WTC11 (cell line): ENCODE measurements at regions of chr18 and their contacts with region 1.

Region 1: GRCh38 chr18:48951448-48952286 is 902 bp upstream of the SMAD7 start:
- DNase-seq: peak; percentile 76
- ATAC-seq: peak; percentile 22
- H3K4me3 Mint-ChIP-seq: peak overlapping the region; percentile 91
- H3K27ac Mint-ChIP-seq: peak overlapping the region; percentile 99
- H3K4me1 Mint-ChIP-seq: peaks cover 52% of the 10 kb centered on the region
- H3K27me3 Mint-ChIP-seq: peaks cover 5% of the 10 kb centered on the region
- CTCF ChIP-seq: no peak

Region 2: DNA sequence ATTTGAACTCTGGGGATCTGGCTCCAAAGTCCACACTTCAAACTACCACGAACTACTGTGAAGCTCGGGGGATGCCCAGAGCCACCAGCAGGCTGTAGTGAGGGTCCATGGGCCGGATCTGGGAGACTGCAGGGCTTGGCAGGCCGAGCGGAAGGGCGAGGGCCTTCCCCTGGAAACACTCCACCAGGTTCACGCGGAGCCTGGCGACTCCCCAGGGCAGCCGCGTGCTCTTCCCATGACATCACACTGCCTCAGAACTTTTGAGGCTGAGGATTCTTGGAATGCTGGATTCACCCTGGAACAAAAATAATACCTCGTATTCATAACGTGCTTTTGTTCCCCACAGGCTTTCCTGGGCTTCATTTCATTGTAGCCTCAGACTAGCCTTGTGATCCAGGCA is 201.9 kb before region 1 on chr18:
- CTCF ChIA-PET with region 1: no interaction called
- POLR2A ChIA-PET with region 1: no interaction called
- DNase-seq: no peak
- ATAC-seq: no peak
- H3K4me3 Mint-ChIP-seq: no peak overlapping the region
- H3K27ac Mint-ChIP-seq: no peak overlapping the region
- H3K4me1 Mint-ChIP-seq: no peaks in the 10 kb centered on the region
- H3K27me3 Mint-ChIP-seq: no peaks in the 10 kb centered on the region
- CTCF ChIP-seq: no peak

Region 3: DNA sequence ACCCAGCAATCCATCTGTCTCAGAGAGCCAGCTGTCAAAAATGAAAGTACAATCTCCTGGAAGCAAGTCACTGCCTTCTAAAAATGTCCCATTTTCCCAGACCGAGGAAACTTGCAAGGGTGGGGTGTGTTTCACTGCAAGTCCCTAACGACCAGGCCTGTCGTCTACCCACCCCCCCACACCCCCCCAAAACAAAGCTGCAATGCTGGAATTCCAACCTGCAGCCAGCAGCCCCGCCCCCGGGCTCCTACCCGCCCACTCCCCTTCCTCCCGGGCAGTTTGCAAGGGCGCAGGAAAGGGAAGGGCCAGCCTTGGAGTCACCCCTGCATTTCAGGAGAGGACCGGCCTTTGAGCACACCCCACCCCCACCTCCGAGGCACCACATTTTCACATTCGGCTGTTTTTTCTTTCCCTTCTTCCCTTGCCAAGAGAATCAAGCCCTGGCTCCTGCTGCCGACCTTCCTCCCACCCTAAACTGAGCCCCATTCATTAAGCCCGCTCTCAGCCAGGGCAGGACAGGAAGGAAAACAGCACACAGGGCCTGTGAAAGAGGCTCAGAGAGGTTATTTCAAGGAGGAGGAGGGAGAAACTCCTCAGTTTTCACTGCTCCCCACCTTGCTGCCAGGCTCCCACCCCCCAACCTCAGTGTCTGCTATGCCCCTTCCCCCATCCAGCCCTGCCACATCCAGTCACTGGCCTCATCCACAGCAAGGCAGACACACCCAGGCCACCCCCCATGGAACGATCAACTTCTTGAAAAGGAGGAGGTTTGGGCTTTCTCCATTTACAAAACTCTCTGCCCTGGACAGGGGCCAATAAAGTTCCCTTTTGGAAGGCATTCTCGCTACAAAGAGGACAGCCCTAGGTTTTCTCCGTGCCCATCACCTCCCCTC is 12.2 kb before region 1 on chr18:
- CTCF ChIA-PET with region 1: interaction called, 5 read pairs
- POLR2A ChIA-PET with region 1: interaction called, 10 read pairs
- DNase-seq: peak; percentile 66
- ATAC-seq: peak; percentile 56
- H3K4me3 Mint-ChIP-seq: peak overlapping the region; percentile 20
- H3K27ac Mint-ChIP-seq: peak overlapping the region; percentile 69
- H3K4me1 Mint-ChIP-seq: peaks cover 95% of the 10 kb centered on the region
- H3K27me3 Mint-ChIP-seq: no peaks in the 10 kb centered on the region
- CTCF ChIP-seq: no peak

Region 4: DNA sequence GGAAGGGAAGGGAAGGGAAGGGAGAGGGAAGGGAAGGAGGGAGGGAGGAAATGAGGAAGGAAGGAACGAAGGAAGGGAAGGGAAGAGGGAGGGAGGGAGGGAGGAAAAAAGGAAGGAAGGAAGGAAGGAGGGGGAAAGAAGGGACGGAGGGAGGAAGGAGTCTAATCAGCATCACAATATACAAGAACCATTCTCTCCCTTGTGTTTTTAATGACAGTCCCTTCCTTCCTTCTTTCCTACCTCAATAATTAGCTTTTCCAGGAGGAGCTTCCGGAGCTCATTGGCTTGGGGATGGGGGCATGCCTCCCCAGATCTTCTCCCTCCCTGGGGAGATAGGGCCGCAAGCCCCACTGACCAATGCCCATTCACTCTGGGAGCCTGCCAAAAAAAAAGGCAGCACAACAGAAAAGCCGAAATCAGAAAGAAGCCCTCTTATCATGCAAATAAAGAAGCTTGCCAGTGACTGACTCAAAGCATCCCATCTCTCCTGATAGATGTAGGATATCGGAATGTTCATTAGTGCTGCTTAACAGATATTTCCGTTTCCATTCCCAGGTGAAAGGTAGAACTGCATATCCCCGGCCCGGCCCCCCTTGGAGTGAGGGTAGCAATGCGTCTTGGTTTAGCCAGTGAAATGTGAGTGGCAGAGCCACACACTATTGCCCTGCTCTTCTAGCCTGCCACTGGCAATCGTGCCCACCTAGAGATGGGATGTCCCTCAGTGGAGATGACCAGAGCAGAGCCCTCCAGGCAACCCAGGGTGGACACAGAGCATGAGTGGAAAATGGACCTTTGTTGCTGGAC is 16.9 kb after region 1 on chr18:
- CTCF ChIA-PET with region 1: interaction called, 6 read pairs
- POLR2A ChIA-PET with region 1: interaction called, 10 read pairs
- DNase-seq: no peak
- ATAC-seq: peak; percentile 76
- H3K4me3 Mint-ChIP-seq: peak overlapping the region; percentile 31; the same call in 1 of the 2 replicates
- H3K27ac Mint-ChIP-seq: peak overlapping the region; percentile 73
- H3K4me1 Mint-ChIP-seq: peaks cover 48% of the 10 kb centered on the region
- H3K27me3 Mint-ChIP-seq: peaks cover 3% of the 10 kb centered on the region; the same call in 1 of the 2 replicates
- CTCF ChIP-seq: no peak